Common myeloid progenitor, CD34-positive (primary cell): ENCODE measurements at regions of chr18 and their contacts with region 1.

Region 1: DNA sequence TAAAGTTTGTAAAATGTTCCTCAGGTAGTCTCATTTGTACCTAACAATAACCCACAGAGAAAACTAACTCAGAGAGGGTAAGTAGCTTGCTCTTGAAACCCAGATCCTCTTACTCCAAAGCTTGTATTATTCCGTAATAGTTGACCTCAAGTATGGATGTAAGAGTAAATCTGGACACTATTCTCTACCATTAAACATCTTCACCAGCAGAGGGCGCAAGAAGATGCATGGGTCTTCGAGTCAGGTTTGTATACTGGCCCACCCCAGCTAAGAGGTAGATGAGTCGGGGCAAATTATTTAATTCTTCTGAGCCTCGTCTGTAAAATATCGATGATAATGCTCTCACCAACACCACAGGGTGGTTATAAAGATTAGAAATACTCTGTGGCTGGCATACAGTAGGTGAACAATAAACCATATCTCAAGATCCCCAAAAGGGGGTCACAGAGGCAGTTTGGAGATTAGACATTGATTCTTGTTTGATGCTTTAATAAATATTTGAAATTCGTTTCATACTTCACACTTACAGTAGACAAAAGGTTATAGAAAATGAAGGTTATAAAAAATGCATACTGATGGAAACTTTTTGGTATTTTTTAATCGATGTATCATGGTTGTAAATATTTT is 3.5 kb upstream of the CABLES1 start:
- DNase-seq: peak; percentile 79 to 87 (median 82)
- H3K4me3 ChIP-seq: no peak overlapping the region
- H3K27ac ChIP-seq: no peak overlapping the region
- H3K4me1 ChIP-seq: peaks cover 11 to 21% (median 16%) of the 10 kb centered on the region in 4 experiments
- H3K27me3 ChIP-seq: no peaks in the 10 kb centered on the region

Region 2: DNA sequence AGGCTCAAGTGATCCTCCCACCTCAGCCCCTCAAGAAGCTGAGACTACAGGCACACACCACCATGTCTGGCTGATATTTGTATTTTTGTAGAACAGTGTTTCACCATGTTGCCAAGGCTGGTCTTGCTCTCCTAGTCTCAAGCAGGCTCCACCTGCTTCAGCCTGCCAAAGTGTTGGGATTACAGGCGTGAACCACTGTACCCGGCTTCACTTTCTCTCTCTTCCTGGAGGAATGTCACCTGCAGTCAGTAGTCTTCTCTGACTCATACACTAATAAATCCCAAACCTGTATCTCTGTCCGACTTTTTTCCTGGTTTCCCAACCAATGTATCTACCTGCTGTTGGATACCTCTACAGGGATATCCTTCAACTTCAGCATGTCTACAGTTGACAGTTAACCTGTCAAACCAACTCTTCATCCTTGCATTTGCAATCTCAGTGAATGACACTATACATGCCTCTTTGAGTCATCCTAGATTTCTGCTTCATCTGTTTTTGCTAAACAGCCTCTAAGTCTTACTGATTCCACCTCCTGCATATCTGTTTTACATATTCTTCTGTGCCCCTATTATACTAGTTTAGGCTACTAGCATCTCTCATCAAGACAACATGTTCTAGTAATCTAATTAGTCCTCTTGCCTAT is 144.1 kb before region 1 on chr18:
- CTCF ChIA-PET with region 1: no interaction called
- POLR2A ChIA-PET with region 1: no interaction called
- DNase-seq: no peak
- H3K4me3 ChIP-seq: no peak overlapping the region
- H3K27ac ChIP-seq: no peak overlapping the region
- H3K4me1 ChIP-seq: peaks cover 0 to 2% (median 0%) of the 10 kb centered on the region in 4 experiments
- H3K27me3 ChIP-seq: no peaks in the 10 kb centered on the region

Region 3: DNA sequence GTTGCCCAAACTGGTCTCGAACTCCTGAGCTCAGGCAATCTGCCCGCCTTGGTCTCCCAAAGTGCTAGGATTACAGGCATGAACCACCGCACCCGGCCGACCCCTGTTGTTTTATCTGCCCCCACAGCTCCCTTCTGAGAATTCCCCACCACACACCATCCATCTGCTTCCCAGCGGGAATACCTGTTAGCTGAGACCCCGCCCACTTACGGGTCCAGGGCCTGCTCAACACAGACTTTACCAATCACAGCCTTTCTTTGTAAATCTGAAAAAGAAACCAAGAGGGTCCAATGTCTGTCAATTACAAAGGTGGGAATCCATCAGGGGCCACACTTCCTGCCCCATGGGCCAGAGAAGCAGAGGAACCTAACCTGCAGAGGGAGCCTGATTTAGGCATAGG is 10.7 kb before region 1 on chr18:
- CTCF ChIA-PET with region 1: interaction called, 15 read pairs
- POLR2A ChIA-PET with region 1: no interaction called
- DNase-seq: no peak
- H3K4me3 ChIP-seq: no peak overlapping the region
- H3K27ac ChIP-seq: no peak overlapping the region
- H3K4me1 ChIP-seq: no peaks in the 10 kb centered on the region
- H3K27me3 ChIP-seq: no peaks in the 10 kb centered on the region

Region 4: DNA sequence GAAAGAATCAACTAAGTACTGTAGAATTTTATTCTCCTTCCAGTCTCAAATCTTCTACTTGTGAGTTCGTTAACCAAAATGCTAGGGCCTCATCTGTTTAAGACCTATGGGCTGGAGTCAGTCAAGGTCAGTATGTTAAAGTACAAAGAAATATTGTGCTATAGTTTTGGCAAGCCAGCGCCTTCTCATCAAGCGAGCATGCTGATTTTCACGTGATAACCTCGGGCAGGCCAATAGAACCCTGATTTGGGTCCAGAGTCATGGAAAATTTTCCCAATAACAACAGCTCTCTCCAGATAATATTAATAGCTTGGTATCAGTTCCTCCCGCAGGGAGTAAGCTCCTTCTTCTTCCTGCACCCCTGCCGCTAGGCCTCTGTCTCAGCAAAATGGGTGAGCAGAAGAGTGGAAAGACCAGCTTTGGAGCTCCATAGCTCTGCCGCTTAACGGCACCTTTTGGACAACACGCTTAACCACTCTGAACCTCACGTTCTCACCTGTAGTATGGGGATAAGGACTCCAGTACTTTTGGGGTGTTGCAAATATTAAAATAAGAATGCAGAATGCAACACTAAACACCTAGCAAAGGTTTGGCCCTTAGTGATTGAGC is 15.2 kb after region 1 on chr18:
- CTCF ChIA-PET with region 1: interaction called, 17 read pairs
- POLR2A ChIA-PET with region 1: interaction called, 4 read pairs
- DNase-seq: no peak
- H3K4me3 ChIP-seq: no peak overlapping the region
- H3K27ac ChIP-seq: no peak overlapping the region
- H3K4me1 ChIP-seq: peaks cover 3 to 43% (median 38%) of the 10 kb centered on the region in 4 experiments
- H3K27me3 ChIP-seq: no peaks in the 10 kb centered on the region

Region 5: DNA sequence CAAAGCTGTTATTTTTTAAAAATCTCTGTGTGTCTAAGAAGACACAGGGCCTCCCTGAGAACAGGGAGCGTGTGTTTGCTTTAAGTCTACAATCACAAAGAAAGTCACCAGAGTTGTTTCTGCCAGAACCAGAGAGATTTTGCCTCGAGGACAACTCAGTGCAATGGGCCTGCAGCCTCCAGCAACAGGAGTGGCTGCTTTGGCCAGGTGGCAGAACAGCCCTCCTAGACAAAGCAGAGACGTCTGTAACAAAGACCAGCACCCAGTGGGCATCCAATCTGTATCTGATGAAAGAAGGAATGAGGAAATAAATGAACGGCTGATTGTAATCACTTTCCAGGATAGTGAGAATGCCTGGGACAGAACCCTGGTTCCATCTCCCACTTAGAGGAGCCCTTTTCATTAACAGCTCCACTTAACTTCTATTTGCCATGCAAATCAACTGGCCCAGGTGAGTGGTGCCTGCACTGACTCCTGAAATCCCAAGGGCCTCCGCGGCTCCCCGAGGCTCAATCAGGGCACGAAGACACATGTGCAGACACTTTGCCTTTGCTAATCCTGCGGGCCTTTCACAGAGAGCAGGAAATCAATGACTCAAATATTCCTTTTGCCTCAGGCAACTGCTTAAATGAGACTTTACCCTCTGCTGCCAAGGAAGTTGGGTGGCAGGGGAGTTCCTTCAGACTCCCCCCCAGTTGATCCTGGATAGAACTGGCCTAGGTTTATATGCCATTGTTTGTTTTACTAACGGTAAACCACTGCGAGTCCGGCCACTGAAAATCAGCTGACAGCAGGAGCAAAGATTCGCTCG is 150.0 kb after region 1 on chr18:
- CTCF ChIA-PET with region 1: no interaction called
- POLR2A ChIA-PET with region 1: no interaction called
- DNase-seq: no peak
- H3K4me3 ChIP-seq: no peak overlapping the region
- H3K27ac ChIP-seq: no peak overlapping the region
- H3K4me1 ChIP-seq: peaks cover 0 to 5% (median 4%) of the 10 kb centered on the region in 4 experiments
- H3K27me3 ChIP-seq: no peaks in the 10 kb centered on the region

Region 6: DNA sequence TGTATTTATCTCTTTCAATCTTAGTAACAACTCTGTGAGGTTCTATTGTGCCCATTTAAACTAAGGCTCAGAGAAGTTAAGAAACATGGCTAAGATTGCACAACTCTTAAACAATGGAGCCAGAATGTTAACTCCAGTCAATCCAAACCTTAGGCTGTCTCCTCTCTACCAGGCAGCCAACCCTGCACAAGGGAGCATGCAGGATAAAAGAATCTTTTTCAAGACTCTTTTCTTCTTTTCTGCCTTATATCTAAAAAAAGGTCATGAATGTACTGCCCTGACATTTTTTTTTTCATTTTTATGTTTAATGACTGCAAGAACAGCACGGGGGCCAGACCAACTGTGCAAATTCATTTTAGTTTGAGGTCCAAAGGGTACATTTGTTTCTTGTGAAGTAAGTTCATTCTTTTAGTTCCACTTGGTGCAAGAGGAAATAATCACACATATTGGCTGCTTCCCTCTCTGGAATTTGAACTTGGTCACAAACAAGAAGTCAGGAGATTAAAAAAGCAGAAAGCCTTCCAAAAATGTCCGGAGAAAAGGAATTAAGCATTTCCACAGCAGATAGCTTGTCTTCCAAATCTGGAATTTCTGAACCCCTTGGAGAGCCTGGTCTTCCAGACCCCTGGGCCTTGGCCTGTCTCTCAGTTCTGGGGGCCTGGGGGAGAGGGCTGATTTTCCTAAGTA is 225.3 kb after region 1 on chr18:
- CTCF ChIA-PET with region 1: interaction called, 16 read pairs
- POLR2A ChIA-PET with region 1: no interaction called
- DNase-seq: no peak
- H3K4me3 ChIP-seq: no peak overlapping the region
- H3K27ac ChIP-seq: no peak overlapping the region
- H3K4me1 ChIP-seq: peaks cover 2 to 46% (median 31%) of the 10 kb centered on the region in 4 experiments
- H3K27me3 ChIP-seq: no peaks in the 10 kb centered on the region